ENCODE measurements at regions of chr14 and their contacts with region 1.

Region 1: DNA sequence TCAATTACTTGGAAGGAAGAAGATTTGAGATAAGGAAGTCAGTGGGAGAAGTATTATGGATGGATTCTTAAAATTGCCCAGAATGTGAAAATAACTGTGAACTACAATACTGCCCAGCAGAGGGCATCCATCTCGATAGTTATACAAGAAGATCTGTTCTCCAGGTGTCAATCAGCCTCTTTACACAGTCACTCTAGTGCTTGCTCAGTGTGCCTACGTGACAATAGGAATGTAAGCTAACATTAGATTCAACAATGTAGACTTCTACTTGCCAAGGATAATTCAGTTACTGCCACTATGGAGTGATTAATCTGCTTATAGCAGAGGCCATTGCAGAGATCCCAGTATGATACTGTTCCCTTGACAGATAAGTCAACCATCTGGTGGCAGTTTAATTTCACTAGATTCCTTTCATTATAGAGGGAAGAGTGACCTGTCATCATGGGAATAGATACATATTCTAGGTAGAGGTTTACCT is 10.6 kb upstream of the MAP4K5 start:
- DNase-seq: peak in 1 of 2 donors; percentile 29
- ATAC-seq: peak in 3 of 8 donors; percentile 25 to 51 (median 33)
- H3K4me3 ChIP-seq: no peak overlapping the region
- H3K27ac ChIP-seq: no peak overlapping the region
- H3K4me1 ChIP-seq: peaks cover 0 to 3% (median 0%) of the 10 kb centered on the region in 9 donors
- H3K27me3 ChIP-seq: no peaks in the 10 kb centered on the region
- CTCF ChIP-seq: peak; percentile 21 to 66 (median 58)

Region 2: GRCh38 chr14:50778721-50779483 is 235.9 kb after region 1 on chr14:
- intact Hi-C with region 1: loop called in 2 of 10 experiments (anchors 2 to 5 kb)
- DNase-seq: no peak
- ATAC-seq: no peak
- H3K4me3 ChIP-seq: no peak overlapping the region
- H3K27ac ChIP-seq: peak overlapping the region in 1 of 10 donors; percentile 26
- H3K4me1 ChIP-seq: peaks cover 0 to 48% (median 19%) of the 10 kb centered on the region in 9 donors
- H3K27me3 ChIP-seq: no peaks in the 10 kb centered on the region
- CTCF ChIP-seq: no peak